SK-N-SH (cell line): ENCODE measurements at regions of chr6 and their contacts with region 1.

Region 1: DNA sequence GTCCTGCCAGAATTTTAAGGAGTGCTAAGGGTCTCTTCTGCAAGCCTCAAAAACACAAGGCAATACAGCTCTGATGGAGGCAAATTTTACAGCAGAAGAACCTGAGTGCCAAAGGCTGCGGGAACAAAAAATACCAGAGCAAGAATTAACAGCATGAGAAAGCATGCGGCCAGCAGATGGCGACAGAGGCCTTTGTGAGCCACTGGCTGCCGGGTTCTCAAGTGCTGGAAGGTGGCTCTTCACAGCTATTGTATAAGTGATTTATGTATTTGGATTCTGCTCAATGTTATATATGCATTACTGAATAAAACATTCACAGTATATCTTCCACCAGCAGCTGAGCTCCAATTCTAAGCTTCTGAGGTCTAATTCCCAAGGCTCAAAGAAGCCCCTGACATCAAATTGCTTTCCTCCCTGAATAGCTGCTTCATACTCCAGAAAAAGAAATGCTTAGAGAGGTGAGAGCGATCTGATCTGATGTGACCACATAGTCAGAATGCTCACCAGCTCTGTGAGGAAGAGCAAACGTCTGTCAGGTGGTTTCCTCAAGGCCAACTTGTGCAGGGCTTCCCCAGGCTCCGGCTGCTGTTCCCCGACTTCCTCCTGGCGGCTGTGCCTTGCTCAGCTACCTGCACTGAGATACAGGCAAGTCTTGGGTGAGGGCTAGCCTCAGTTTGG is 58.6 kb downstream of the PPP1R3G start:
- DNase-seq: peak; percentile 77
- H3K4me3 ChIP-seq: no peak overlapping the region; a peak in 1 of 4 replicates
- H3K27ac ChIP-seq: no peak overlapping the region
- H3K4me1 ChIP-seq: no peaks in the 10 kb centered on the region
- H3K27me3 ChIP-seq: no peaks in the 10 kb centered on the region
- CTCF ChIP-seq: peak; percentile 96
- EP300 ChIP-seq: no peak
- RAD21 ChIP-seq: peak; percentile 97

Region 2: GRCh38 chr6:5159148-5159547 is 15.4 kb after region 1 on chr6:
- CTCF ChIA-PET with region 1: interaction called, 16 read pairs
- POLR2A ChIA-PET with region 1: no interaction called
- DNase-seq: no peak
- H3K4me3 ChIP-seq: no peak overlapping the region
- H3K27ac ChIP-seq: no peak overlapping the region
- H3K4me1 ChIP-seq: no peaks in the 10 kb centered on the region; a peak in 1 of 4 replicates
- H3K27me3 ChIP-seq: no peaks in the 10 kb centered on the region
- CTCF ChIP-seq: no peak
- EP300 ChIP-seq: no peak
- RAD21 ChIP-seq: no peak

Region 3: GRCh38 chr6:5181506-5182287 is 37.9 kb after region 1 on chr6:
- CTCF ChIA-PET with region 1: interaction called, 14 read pairs
- POLR2A ChIA-PET with region 1: no interaction called
- DNase-seq: no peak
- H3K4me3 ChIP-seq: no peak overlapping the region
- H3K27ac ChIP-seq: no peak overlapping the region
- H3K4me1 ChIP-seq: no peaks in the 10 kb centered on the region
- H3K27me3 ChIP-seq: no peaks in the 10 kb centered on the region
- CTCF ChIP-seq: no peak
- EP300 ChIP-seq: no peak
- RAD21 ChIP-seq: no peak

Region 4: GRCh38 chr6:5214570-5215052 is 70.8 kb after region 1 on chr6:
- CTCF ChIA-PET with region 1: interaction called, 17 read pairs
- POLR2A ChIA-PET with region 1: no interaction called
- DNase-seq: peak; percentile 54
- H3K4me3 ChIP-seq: no peak overlapping the region; a peak in 1 of 4 replicates
- H3K27ac ChIP-seq: no peak overlapping the region
- H3K4me1 ChIP-seq: peaks cover 9 to 16% of the 10 kb centered on the region in 2 experiments; a peak in 3 of 4 replicates
- H3K27me3 ChIP-seq: no peaks in the 10 kb centered on the region
- CTCF ChIP-seq: peak; percentile 67
- EP300 ChIP-seq: no peak
- RAD21 ChIP-seq: peak; percentile 77

Region 5: DNA sequence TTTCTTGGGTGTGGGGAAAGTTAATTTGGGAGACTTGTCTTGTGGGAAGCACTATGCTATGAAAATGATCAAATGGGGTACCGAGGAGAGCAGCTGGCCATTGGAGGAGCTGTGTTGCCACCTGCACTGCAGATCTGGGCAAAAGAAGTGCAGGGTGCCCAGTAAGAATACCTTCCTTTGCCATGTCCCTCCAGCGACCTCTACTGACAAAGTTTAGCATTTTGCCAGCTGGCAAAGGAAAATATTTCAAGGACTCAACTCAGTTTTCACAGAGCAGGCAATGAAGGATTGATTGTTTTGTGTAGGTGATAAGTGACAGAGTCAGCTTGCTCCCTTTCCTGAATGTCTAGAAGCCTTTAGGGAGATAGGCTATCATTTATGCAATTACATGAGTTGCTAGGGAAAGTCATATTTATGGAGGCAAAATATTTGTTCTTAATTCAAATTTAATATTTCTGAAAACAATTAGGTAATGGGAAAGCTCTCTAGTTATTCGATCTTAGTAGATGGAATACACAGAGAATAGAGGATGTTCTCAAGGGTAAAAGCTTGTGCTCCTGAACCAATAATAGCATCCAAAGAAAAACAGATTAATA is 236.0 kb after region 1 on chr6:
- CTCF ChIA-PET with region 1: interaction called, 21 read pairs
- POLR2A ChIA-PET with region 1: no interaction called
- DNase-seq: peak; percentile 32
- H3K4me3 ChIP-seq: no peak overlapping the region; a peak in 1 of 4 replicates
- H3K27ac ChIP-seq: no peak overlapping the region
- H3K4me1 ChIP-seq: peaks cover 0 to 6% of the 10 kb centered on the region in 2 experiments; a peak in 2 of 4 replicates
- H3K27me3 ChIP-seq: no peaks in the 10 kb centered on the region
- CTCF ChIP-seq: peak; percentile 49
- EP300 ChIP-seq: no peak
- RAD21 ChIP-seq: peak; percentile 71

Region 6: GRCh38 chr6:5471044-5471443 is 327.3 kb after region 1 on chr6:
- CTCF ChIA-PET with region 1: interaction called, 16 read pairs
- POLR2A ChIA-PET with region 1: no interaction called
- DNase-seq: peak; percentile 66
- H3K4me3 ChIP-seq: peak overlapping the region in 1 of 2 experiments; percentile 3; a peak in 1 of 4 replicates
- H3K27ac ChIP-seq: no peak overlapping the region; a peak in 2 of 4 replicates
- H3K4me1 ChIP-seq: peaks cover 20 to 35% of the 10 kb centered on the region in 2 experiments; a peak in 3 of 4 replicates
- H3K27me3 ChIP-seq: no peaks in the 10 kb centered on the region
- CTCF ChIP-seq: peak; percentile 98
- EP300 ChIP-seq: no peak
- RAD21 ChIP-seq: peak; percentile 92

Region 7: DNA sequence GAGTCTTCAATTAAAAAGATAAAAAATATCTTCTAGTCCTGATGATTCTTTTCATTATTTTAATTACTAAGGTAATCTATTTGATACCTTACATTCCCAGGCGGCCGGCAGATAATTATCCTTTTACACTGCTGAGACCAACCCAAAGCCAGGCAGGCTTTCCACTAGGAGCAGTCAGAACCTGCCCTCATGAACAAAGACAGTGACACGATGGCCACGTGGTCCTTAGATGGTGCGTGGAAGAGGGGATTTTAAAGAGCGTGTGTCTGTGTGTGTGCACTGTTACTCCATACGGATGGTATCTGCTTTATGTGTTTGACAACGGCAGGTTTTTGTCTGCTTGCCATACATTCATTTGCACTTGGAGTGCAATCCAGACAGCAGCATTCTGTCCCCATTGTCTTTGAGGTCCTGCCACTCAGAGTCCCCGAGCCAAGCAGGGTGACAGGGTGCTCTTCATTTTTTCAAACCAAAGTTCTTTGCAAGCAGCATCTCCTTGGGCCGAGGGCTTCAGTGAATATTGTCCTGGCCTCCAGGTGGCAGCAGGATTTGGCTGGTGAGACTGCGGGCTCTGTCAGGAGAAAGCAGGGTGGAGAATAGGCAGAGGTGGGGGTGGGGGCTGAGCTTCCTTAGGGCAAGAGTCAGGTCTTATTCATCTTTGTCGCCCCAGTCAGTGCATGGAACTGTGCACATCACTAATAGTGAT is 602.4 kb after region 1 on chr6:
- CTCF ChIA-PET with region 1: no interaction called
- POLR2A ChIA-PET with region 1: no interaction called
- DNase-seq: peak; percentile 47
- H3K4me3 ChIP-seq: no peak overlapping the region
- H3K27ac ChIP-seq: peak overlapping the region in 1 of 2 experiments; percentile 25; a peak in 1 of 4 replicates
- H3K4me1 ChIP-seq: peaks cover 2 to 62% of the 10 kb centered on the region in 2 experiments; a peak in 3 of 4 replicates
- H3K27me3 ChIP-seq: no peaks in the 10 kb centered on the region
- CTCF ChIP-seq: 0 out of 2 replicates have a peak, but pooled peaks have one; percentile 16
- EP300 ChIP-seq: no peak
- RAD21 ChIP-seq: peak; percentile 46